PC-9 (cell line): ENCODE measurements at regions of chr11 and their contacts with region 1.

Region 1: DNA sequence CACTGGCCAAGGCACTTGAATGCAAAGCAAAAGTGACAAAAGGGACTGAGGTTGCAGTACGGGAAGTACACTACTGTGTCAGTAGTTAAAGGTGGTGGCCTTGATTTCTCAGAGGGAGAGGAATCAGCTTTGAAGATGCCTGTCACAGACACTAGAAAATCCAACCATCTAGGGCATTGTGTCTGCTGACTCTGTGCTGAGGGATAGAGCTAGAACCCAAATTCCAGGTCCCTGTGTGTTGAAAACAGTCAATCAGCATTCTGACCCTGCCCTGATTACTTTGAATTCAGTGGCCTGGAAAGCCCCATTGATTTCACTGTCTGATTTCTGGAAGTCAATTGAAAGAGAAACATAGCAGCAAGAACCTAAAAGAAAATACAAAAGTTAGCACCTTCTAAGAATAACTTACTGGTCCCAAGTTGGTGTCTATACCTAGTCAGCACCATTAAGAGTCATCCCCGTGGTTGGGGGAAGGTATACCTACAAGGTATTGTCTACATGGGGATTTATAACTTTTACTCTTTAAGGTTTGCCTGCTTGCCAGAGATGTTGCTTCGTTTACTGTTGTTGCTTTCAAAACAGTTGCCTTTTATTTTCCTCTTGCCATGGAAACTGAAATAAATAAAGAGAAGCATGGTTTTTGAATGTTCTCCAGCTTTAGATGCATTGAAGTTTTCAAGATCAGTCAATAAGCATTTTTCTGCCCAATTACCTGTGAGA is 97.3 kb downstream of the PDHX start:
- DNase-seq: no peak
- H3K4me3 ChIP-seq: no peak overlapping the region
- H3K27ac ChIP-seq: no peak overlapping the region
- H3K4me1 ChIP-seq: peaks cover 56% of the 10 kb centered on the region
- H3K27me3 ChIP-seq: no peaks in the 10 kb centered on the region
- CTCF ChIP-seq: no peak

Region 2: GRCh38 chr11:34997952-34998528 is 15.6 kb before region 1 on chr11:
- CTCF ChIA-PET with region 1: interaction called, 8 read pairs
- POLR2A ChIA-PET with region 1: interaction called, 31 read pairs
- intact Hi-C with region 1: no loop called
- DNase-seq: peak in 1 of 2 experiments; percentile 71
- H3K4me3 ChIP-seq: no peak overlapping the region
- H3K27ac ChIP-seq: peak overlapping the region; percentile 47
- H3K4me1 ChIP-seq: peaks cover 11% of the 10 kb centered on the region
- H3K27me3 ChIP-seq: no peaks in the 10 kb centered on the region
- CTCF ChIP-seq: peak; percentile 92

Region 3: GRCh38 chr11:35040221-35040942 is 26.7 kb after region 1 on chr11:
- CTCF ChIA-PET with region 1: interaction called, 6 read pairs
- POLR2A ChIA-PET with region 1: interaction called, 10 read pairs
- intact Hi-C with region 1: loop called (anchors 1 kb)
- DNase-seq: peak; percentile 53 to 96
- H3K4me3 ChIP-seq: peak overlapping the region; percentile 55
- H3K27ac ChIP-seq: peak overlapping the region; percentile 87
- H3K4me1 ChIP-seq: peaks cover 65% of the 10 kb centered on the region
- H3K27me3 ChIP-seq: no peaks in the 10 kb centered on the region
- CTCF ChIP-seq: no peak

Region 4: GRCh38 chr11:35144136-35144741 is 130.6 kb after region 1 on chr11:
- CTCF ChIA-PET with region 1: interaction called, 4 read pairs
- POLR2A ChIA-PET with region 1: interaction called, 7 read pairs
- intact Hi-C with region 1: loop called (anchors 1 kb)
- DNase-seq: peak; percentile 69 to 91
- H3K4me3 ChIP-seq: peak overlapping the region; percentile 70
- H3K27ac ChIP-seq: peak overlapping the region; percentile 91
- H3K4me1 ChIP-seq: peaks cover 85% of the 10 kb centered on the region
- H3K27me3 ChIP-seq: no peaks in the 10 kb centered on the region
- CTCF ChIP-seq: no peak

Region 5: DNA sequence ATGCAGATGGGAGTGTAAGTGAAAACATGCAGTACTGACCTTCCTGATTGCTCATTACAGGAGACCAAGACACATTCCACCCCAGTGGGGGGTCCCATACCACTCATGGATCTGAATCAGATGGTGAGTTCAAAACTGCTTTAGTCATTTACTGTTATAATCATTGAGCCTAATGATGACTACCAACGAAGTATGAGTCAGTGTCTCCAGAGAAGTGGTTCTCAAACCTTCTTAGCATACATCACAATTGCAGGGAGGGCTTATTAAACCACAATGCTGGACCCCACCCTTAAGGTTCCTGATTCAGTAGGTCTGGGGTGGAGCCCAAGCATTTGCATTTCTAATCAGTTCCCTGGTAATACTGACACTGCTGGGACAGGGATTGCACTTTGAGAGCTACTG is 201.1 kb after region 1 on chr11:
- CTCF ChIA-PET with region 1: no interaction called
- POLR2A ChIA-PET with region 1: interaction called, 16 read pairs
- intact Hi-C with region 1: no loop called
- DNase-seq: peak; percentile 58 to 89
- H3K4me3 ChIP-seq: no peak overlapping the region
- H3K27ac ChIP-seq: peak overlapping the region; percentile 64
- H3K4me1 ChIP-seq: peaks cover 67% of the 10 kb centered on the region
- H3K27me3 ChIP-seq: no peaks in the 10 kb centered on the region
- CTCF ChIP-seq: no peak

Region 6: DNA sequence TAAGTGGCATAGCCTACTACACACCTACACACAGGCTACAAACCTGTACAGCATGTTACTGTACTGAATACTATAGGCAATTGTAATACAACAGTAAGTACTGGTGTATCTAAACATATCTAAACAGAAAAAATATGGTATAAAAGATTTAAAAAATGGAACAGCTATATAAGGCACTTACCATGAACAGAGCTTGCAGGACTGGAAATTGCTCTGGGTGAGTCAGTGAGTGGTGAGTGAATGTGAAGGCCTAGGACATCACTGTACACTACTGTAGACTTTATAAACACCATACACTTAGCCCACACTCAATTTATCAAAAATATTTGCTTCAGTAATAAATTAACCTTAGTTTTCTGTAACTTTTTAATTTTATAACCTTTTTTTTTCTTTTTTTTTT is 487.1 kb after region 1 on chr11:
- CTCF ChIA-PET with region 1: no interaction called
- POLR2A ChIA-PET with region 1: no interaction called
- intact Hi-C with region 1: no loop called
- DNase-seq: no peak
- H3K4me3 ChIP-seq: no peak overlapping the region
- H3K27ac ChIP-seq: no peak overlapping the region
- H3K4me1 ChIP-seq: no peaks in the 10 kb centered on the region
- H3K27me3 ChIP-seq: peaks cover 6% of the 10 kb centered on the region; the same call in 1 of the 2 replicates
- CTCF ChIP-seq: no peak